Body of pancreas (tissue), 4 donors: ENCODE measurements at regions of chr9 and their contacts with region 1.

Region 1: GRCh38 chr9:75889977-75890471 is 449 bp upstream of the PCSK5 start:
- DNase-seq: peak; percentile 36 to 55 (median 42)
- ATAC-seq: peak; percentile 26
- H3K4me3 ChIP-seq: peak overlapping the region; percentile 48 to 80
- H3K27ac ChIP-seq: peak overlapping the region; percentile 54 to 83 (median 80)
- H3K4me1 ChIP-seq: peaks cover 20% of the 10 kb centered on the region
- H3K27me3 ChIP-seq: no peaks in the 10 kb centered on the region
- CTCF ChIP-seq: no peak
- POLR2A ChIP-seq: no peak

Region 2: GRCh38 chr9:76032038-76032796 is 142.2 kb after region 1 on chr9:
- intact Hi-C with region 1: no loop called
- DNase-seq: no peak
- ATAC-seq: no peak
- H3K4me3 ChIP-seq: no peak overlapping the region
- H3K27ac ChIP-seq: no peak overlapping the region
- H3K4me1 ChIP-seq: no peaks in the 10 kb centered on the region
- H3K27me3 ChIP-seq: no peaks in the 10 kb centered on the region
- CTCF ChIP-seq: no peak
- POLR2A ChIP-seq: no peak

Region 3: DNA sequence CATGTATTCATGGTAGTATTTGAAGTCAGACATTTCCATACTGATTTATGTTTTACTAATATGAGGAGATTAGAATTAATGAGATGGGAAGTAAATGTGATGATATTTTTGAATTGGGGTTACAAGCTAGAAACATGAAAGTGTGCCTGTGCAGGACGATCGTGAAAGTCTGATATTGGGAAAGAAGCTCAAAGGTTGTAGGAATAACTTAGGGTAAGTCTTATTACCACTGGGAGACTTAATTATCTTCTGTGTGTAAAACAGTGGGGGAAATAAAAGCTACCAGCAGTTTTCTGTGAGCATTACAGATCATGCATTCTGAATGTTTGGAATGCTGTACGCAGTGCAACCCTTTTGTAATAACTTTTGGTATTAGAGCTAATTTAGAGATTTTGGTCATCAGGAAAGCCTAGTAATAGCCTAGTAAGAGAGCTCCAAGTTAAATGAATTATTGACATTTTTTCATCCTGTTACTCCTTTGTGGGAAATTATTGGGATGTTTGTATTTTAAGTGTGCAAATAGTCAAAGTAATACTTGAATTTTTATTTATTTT is 154.3 kb after region 1 on chr9:
- intact Hi-C with region 1: no loop called
- DNase-seq: no peak
- ATAC-seq: no peak
- H3K4me3 ChIP-seq: no peak overlapping the region
- H3K27ac ChIP-seq: no peak overlapping the region
- H3K4me1 ChIP-seq: no peaks in the 10 kb centered on the region
- H3K27me3 ChIP-seq: no peaks in the 10 kb centered on the region
- CTCF ChIP-seq: no peak
- POLR2A ChIP-seq: no peak

Region 4: DNA sequence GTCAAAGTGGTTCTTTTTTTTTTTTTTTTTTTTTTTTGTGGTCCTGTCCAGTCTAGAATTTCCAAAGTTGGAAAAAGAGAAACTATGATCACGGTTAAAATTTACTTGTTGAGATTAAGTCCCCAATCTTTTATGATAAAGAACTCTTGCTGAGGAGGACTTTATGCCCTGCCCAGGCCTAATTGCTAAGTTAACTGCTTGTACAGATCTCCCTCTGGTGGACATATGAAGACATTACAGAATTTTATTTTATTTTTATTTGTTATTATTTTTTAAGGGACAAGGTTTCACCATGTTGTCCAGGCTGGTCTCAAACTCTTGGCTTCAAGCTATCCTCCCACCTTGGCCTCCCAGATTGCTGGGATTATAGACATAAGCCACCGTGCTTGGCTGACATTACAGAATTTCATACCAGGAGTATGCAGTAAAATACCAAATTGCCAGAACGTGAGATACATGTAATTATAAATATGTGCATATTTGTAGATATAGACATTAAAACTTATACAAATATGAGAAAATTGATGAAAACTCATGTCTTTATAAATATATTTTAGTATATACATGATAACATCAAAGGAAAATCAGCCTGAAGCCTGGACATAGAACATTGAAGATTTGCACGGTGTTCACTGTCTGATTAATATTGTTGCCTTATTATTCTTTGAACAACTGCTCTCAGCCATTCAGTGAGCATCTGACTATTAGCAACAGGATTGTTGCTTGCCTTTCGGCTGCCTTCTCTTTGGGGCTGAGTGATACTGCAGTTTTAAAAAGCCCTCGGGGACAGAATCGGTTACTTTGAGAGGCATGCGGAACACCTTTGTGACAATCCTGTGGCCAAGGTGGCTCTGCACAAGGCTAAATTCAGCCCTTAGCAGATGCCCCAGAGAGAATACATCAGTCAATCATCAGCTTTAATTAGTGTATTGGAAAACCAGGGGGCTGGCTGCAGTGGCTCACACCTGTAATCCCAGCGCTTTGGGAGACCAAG is 413.2 kb after region 1 on chr9:
- intact Hi-C with region 1: loop called (anchors 10 kb)
- DNase-seq: peak; percentile 22 to 35 (median 34)
- ATAC-seq: peak; percentile 73
- H3K4me3 ChIP-seq: no peak overlapping the region
- H3K27ac ChIP-seq: no peak overlapping the region
- H3K4me1 ChIP-seq: no peaks in the 10 kb centered on the region
- H3K27me3 ChIP-seq: no peaks in the 10 kb centered on the region
- CTCF ChIP-seq: peak; percentile 53 to 80 (median 74)
- POLR2A ChIP-seq: no peak